ENCODE measurements at regions of chr19 and their contacts with region 1.

Region 1: DNA sequence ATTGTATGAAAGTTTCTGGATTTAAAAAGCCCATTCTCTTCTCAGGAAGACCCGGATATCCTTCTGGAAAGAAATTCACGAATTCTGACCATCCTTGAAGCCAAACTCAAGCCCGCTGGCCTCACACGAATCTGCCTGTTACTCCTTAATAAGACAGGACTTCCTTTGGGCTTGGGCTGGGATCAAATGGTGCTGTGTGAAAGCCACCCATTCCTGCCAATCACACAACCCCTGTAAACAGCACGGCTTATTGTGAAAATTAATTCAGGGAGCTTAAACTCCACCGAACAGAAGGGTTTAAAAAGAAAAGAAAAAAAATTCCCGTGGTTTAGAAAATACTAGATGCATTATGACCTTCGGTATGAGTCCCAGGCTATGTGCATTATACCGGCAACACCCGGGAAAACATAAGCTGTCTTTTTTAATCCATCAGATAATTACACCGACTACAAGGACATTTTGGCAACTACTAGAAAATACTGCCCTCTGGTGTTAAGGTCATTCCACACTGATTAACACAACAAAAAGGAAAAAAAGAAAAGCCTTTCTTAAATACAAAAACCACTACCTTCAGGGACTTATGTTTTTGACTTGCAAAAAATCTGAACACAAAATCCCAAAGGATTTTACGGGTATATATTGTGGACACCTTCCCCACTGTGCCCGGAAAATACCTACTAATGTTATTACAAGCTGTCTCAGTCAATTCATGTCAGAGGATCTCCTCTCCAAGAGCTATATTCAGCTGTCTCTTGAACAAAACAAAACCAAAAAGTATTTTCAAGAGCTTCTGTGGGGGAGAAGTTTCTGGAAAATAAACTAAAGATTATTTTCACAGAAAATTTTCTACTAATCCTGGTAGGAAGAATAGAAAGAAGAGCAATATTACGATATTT is 76.0 kb upstream of the LSM14A start:
- DNase-seq: peak; percentile 78 to 79
- ATAC-seq: peak; percentile 78 to 91
- H3K4me3 ChIP-seq: no peak overlapping the region; the same call in 2 of the 3 replicates
- H3K27ac ChIP-seq: no peak overlapping the region
- H3K4me1 ChIP-seq: no peaks in the 10 kb centered on the region
- CTCF ChIP-seq: peak; percentile 99
- EP300 ChIP-seq: no peak
- POLR2A ChIP-seq: no peak
- RAD21 ChIP-seq: peak; percentile 97

Region 2: DNA sequence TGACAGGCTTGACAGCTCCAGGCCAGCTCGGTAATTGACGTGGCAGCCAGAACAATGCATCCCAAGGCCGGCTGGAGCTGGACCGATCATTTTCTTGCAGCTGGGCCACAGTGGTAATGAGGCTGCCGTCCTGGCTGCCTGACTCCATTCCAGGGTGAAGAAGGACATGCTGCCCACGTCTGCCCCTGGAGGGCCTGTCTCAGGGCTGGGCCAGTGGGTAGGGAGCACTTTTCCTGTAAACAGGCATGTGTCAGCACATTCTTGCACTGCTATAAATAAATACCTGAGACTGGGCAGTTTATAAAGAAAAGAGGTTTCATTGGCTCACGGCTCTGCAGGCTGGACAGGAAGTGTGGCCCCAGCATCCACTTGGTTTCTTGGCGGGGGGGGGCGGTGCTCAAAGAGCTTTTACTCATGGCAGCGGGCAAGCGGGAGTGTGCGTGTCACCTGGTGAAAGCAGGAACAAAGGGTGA is 337.7 kb before region 1 on chr19:
- CTCF ChIA-PET with region 1: interaction called, 14 read pairs
- POLR2A ChIA-PET with region 1: no interaction called
- DNase-seq: peak in 1 of 2 experiments; percentile 57
- ATAC-seq: peak; percentile 1 to 42; a peak in 3 of 6 replicates
- H3K4me3 ChIP-seq: no peak overlapping the region
- H3K27ac ChIP-seq: no peak overlapping the region
- H3K4me1 ChIP-seq: peaks cover 4% of the 10 kb centered on the region; the same call in 1 of the 3 replicates
- CTCF ChIP-seq: no peak
- EP300 ChIP-seq: no peak
- POLR2A ChIP-seq: no peak
- RAD21 ChIP-seq: no peak

Region 3: DNA sequence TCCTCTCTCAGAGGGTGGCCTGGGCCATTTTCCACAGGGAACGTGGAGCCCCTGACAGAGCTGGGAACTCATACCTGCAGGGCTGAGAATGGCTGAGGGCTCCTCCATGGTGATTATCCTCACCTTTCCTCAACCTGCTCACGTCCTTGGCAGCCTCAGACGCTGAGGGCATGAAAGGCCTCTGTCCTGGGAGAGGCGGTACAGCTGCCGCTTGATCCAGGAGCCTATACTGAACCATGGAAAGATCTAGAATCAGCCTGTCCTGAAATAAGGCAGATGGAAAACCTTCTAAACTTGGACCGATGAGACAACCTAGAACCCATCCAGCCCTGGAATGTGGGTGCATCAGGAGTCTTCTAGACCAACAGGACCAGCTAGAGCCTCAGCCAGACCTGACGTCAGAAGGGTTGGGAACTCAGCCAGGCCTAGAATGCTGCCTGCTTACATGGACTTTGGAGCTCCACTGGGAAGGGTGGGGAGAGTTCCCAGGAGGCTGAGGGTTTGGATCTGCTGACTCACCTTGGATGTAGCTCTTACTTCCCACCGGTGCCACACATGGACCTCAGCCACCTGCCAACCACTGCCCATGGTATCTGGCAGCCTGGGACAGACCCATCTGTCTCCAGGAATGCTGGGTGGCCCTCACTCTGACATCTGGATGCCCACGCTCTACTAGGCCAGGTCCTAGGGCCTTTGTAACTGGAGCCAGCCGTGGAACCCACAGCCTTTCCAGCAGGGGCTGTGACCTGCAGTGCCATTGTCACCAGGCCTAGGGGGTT is 292.1 kb before region 1 on chr19:
- CTCF ChIA-PET with region 1: interaction called, 11 read pairs
- POLR2A ChIA-PET with region 1: no interaction called
- DNase-seq: peak; percentile 96 to 99
- ATAC-seq: peak; percentile 76 to 86
- H3K4me3 ChIP-seq: no peak overlapping the region
- H3K27ac ChIP-seq: peak overlapping the region; percentile 88 to 90
- H3K4me1 ChIP-seq: peaks cover 77% of the 10 kb centered on the region
- CTCF ChIP-seq: no peak
- EP300 ChIP-seq: no peak
- POLR2A ChIP-seq: no peak
- RAD21 ChIP-seq: no peak

Region 4: DNA sequence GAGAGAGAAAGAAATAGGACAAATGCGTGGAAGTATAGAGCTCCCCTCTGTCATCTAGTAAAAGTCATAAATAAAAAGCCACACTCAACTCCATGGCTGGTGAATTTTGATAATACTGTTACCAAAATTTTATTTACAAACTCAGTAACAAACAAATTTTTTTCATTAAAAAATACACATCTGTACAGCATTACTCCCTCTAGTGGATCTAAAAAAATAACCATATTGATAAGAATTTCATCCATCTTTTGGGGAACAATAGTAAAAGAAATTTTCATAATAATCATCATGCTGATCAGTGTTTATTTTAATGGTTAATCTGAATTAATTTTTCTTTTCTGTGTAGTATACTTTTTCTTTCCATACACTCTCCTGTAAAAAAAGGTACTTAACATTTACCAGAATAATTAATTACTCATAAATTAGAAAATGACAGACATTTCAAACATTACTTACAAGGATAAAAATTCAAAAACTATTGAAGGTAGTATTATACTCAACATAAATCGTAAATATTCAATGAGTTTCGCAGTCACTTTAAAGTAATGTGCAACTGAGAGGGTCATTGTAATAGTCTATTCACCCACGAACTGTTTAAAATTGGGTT is 97.4 kb before region 1 on chr19:
- CTCF ChIA-PET with region 1: interaction called, 18 read pairs
- POLR2A ChIA-PET with region 1: no interaction called
- DNase-seq: peak; percentile 16 to 44
- ATAC-seq: peak in 1 of 2 experiments; percentile 38; a peak in 1 of 6 replicates
- H3K4me3 ChIP-seq: peak overlapping the region; percentile 3; the same call in 2 of the 3 replicates
- H3K27ac ChIP-seq: no peak overlapping the region
- H3K4me1 ChIP-seq: peaks cover 10% of the 10 kb centered on the region; the same call in 2 of the 3 replicates
- CTCF ChIP-seq: peak; percentile 82
- EP300 ChIP-seq: no peak
- POLR2A ChIP-seq: no peak
- RAD21 ChIP-seq: peak; percentile 58 to 73

Region 5: DNA sequence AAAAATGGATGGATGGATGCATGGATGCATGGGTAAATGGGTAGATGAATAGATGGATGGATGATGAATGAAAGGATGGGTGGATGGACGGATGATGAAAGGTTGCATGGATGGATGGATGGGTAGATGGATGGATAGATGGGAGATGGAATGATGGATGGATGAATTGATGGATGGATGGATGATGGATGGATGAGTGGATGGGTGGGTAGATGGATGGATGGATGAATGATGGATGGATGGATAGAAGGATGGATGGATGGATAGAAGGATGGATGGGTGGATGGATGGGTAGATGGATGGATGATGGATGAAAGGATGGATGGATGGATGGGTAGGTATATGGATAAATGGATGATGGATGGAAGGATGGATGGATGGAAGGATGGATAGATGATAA is 39.1 kb before region 1 on chr19:
- CTCF ChIA-PET with region 1: interaction called, 24 read pairs
- POLR2A ChIA-PET with region 1: no interaction called
- DNase-seq: no peak
- ATAC-seq: no peak
- H3K4me3 ChIP-seq: no peak overlapping the region
- H3K27ac ChIP-seq: no peak overlapping the region
- H3K4me1 ChIP-seq: no peaks in the 10 kb centered on the region
- CTCF ChIP-seq: no peak
- EP300 ChIP-seq: no peak
- POLR2A ChIP-seq: 0 out of 2 replicates have a peak, but pooled peaks have one; percentile 6
- RAD21 ChIP-seq: no peak

Region 6: DNA sequence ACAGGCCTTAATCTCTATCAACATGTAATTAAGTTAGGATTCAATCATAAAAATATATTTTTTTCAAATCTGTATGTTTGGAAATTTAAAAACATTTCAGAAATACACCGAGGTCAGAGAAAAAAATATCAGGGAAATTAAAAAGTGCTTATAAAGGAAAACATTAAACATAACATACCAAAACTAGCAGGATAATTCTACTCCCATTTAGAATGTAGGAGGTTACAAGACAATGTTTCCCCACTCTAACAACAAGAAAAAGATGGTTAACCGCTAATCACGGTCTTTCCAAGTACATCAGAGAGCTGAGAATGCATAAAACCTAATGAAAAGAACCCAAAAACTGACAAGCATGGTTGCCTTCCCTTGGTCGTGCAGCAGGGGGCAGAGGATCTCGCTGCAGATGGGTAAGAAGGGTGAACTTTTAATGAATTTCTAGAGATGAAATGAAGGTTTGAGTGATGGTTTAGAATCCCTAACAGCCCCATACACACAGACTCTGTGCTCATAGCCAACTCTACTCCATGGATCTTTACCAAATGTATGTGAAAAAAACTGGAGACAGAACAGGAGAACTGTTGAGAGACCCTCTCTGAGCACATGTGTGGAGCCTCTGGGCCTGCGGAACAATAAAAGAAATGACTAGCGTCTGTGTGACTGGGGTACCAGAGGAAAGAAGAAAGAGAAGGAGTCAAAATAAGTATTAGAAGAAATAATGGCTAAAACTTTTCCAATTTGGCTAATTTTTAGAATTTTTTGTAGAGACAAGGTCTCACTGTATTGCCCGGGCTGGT is 24.8 kb after region 1 on chr19:
- CTCF ChIA-PET with region 1: interaction called, 113 read pairs
- POLR2A ChIA-PET with region 1: no interaction called
- DNase-seq: peak; percentile 77 to 87
- ATAC-seq: peak; percentile 70 to 83; a peak in 5 of 6 replicates
- H3K4me3 ChIP-seq: no peak overlapping the region
- H3K27ac ChIP-seq: no peak overlapping the region
- H3K4me1 ChIP-seq: no peaks in the 10 kb centered on the region
- CTCF ChIP-seq: peak; percentile 85
- EP300 ChIP-seq: no peak
- POLR2A ChIP-seq: no peak
- RAD21 ChIP-seq: peak; percentile 66 to 84

Region 7: GRCh38 chr19:34288381-34288780 is 192.1 kb after region 1 on chr19:
- CTCF ChIA-PET with region 1: no interaction called
- POLR2A ChIA-PET with region 1: no interaction called
- DNase-seq: no peak
- ATAC-seq: peak in 1 of 2 experiments; percentile 32; a peak in 1 of 6 replicates
- H3K4me3 ChIP-seq: no peak overlapping the region
- H3K27ac ChIP-seq: no peak overlapping the region
- H3K4me1 ChIP-seq: no peaks in the 10 kb centered on the region
- CTCF ChIP-seq: no peak
- EP300 ChIP-seq: no peak
- POLR2A ChIP-seq: no peak
- RAD21 ChIP-seq: no peak